OCI-LY7 (cell line): ENCODE measurements at regions of chr19 and their contacts with region 1.

Region 1: GRCh38 chr19:19531951-19532805 is 3.5 kb downstream of the YJEFN3 start:
- DNase-seq: peak; percentile 76
- H3K4me3 ChIP-seq: no peak overlapping the region
- H3K27ac ChIP-seq: no peak overlapping the region
- H3K4me1 ChIP-seq: peaks cover 4% of the 10 kb centered on the region
- CTCF ChIP-seq: peak; percentile 93

Region 2: GRCh38 chr19:19464345-19465098 is 67.7 kb before region 1 on chr19:
- CTCF ChIA-PET with region 1: no interaction called
- POLR2A ChIA-PET with region 1: no interaction called
- intact Hi-C with region 1: no loop called
- DNase-seq: no peak
- H3K4me3 ChIP-seq: no peak overlapping the region
- H3K27ac ChIP-seq: no peak overlapping the region
- H3K4me1 ChIP-seq: peaks cover 23% of the 10 kb centered on the region
- CTCF ChIP-seq: no peak

Region 3: GRCh38 chr19:19597809-19598306 is 65.7 kb after region 1 on chr19:
- CTCF ChIA-PET with region 1: no interaction called
- POLR2A ChIA-PET with region 1: no interaction called
- intact Hi-C with region 1: no loop called
- DNase-seq: no peak
- H3K4me3 ChIP-seq: no peak overlapping the region
- H3K27ac ChIP-seq: no peak overlapping the region
- H3K4me1 ChIP-seq: peaks cover 28% of the 10 kb centered on the region
- CTCF ChIP-seq: no peak

Region 4: GRCh38 chr19:19643158-19644053 is 111.2 kb after region 1 on chr19 and contains the start of gene GMIP:
- CTCF ChIA-PET with region 1: no interaction called
- POLR2A ChIA-PET with region 1: no interaction called
- intact Hi-C with region 1: loop called (anchors 1 kb)
- DNase-seq: peak; percentile 85
- H3K4me3 ChIP-seq: peak within 1 kb of the TSS; percentile 78
- H3K27ac ChIP-seq: peak within 1 kb of the TSS; percentile 90
- H3K4me1 ChIP-seq: peaks cover 21% of the 10 kb centered on the region
- CTCF ChIP-seq: peak; percentile 96
- total RNA-seq, gene GMIP: 30.1 and 34.7 TPM in 2 replicates

Region 5: GRCh38 chr19:19745496-19746285 is 213.5 kb after region 1 on chr19:
- CTCF ChIA-PET with region 1: no interaction called
- POLR2A ChIA-PET with region 1: no interaction called
- intact Hi-C with region 1: loop called (anchors 10 kb)
- DNase-seq: no peak
- H3K4me3 ChIP-seq: no peak overlapping the region
- H3K27ac ChIP-seq: no peak overlapping the region
- H3K4me1 ChIP-seq: no peaks in the 10 kb centered on the region
- CTCF ChIP-seq: no peak

Region 6: GRCh38 chr19:19774354-19775033 is 242.3 kb after region 1 on chr19:
- CTCF ChIA-PET with region 1: no interaction called
- POLR2A ChIA-PET with region 1: no interaction called
- intact Hi-C with region 1: no loop called
- DNase-seq: peak; percentile 31
- H3K4me3 ChIP-seq: no peak overlapping the region
- H3K27ac ChIP-seq: no peak overlapping the region
- H3K4me1 ChIP-seq: peaks cover 23% of the 10 kb centered on the region
- CTCF ChIP-seq: no peak

Region 7: DNA sequence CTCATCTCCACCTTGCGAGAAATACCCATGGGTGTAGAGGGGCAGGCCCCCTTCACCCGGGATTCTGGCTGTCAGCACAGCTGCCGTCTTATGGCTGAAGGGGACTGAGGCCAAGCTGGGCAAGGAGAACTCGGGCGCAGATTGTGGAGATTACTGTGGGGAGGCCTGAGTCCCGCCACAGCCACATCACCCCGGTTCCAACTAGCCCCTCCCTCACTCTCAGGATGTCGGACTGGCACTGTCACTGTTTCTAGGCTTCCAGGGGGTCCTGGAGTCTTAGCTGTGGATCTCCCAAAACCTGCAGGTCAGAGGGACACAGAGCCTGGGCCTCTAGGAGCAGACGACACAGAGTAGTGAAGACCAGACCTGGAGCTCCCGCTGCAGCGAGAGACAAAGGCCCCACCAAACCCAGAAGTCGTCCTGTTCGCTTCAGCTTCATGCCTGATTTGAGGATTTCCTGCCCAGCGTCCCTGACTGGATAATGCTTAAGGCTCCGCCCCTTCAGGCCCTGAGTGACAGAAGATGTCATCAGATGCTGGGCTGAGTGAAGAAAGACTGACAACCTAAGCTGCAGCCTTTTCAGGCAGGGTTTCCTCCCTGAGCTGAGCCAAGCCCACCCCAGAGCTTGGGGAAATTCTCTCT is 424.4 kb after region 1 on chr19:
- CTCF ChIA-PET with region 1: no interaction called
- POLR2A ChIA-PET with region 1: no interaction called
- intact Hi-C with region 1: loop called (anchors 1 kb)
- DNase-seq: no peak
- H3K4me3 ChIP-seq: no peak overlapping the region
- H3K27ac ChIP-seq: no peak overlapping the region
- H3K4me1 ChIP-seq: no peaks in the 10 kb centered on the region
- CTCF ChIP-seq: no peak